Naive thymus-derived CD4-positive, alpha-beta T cell (primary cell): ENCODE measurements at regions of chr10 and their contacts with region 1.

Region 1: DNA sequence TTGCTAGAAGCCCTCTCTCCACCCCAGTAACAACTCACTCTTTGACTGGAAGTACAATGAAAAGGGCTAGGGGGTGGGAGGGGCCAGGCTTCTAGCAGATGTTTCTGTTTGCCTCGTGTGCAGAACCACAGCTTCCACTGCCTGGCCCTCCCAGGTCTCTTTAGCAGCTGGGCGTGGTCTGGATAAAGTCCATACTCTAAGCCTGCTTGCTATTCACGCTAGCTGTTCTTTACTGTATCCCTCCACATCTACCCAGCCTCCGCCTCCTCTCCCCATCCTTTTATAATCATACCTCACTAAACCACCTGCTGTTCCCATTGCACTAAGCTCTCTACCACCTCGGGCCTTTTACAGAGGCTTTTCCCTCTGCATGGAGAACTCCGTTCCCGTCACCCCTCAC is 288.8 kb downstream of the CAMK1D start:
- DNase-seq: peak in 1 of 9 donors; percentile 14
- ATAC-seq: no peak
- H3K4me3 ChIP-seq: no peak overlapping the region
- H3K4me3 Mint-ChIP-seq: peak overlapping the region in 8 of 10 donors; percentile 1 to 69 (median 24)
- H3K27ac ChIP-seq: no peak overlapping the region
- H3K27ac Mint-ChIP-seq: peak overlapping the region in 6 of 9 donors; percentile 16 to 90 (median 54)
- H3K4me1 ChIP-seq: peaks cover 0 to 20% of the 10 kb centered on the region in 2 donors
- H3K4me1 Mint-ChIP-seq: peaks cover 24 to 63% (median 51%) of the 10 kb centered on the region in 7 donors
- H3K27me3 ChIP-seq: no peaks in the 10 kb centered on the region
- H3K27me3 Mint-ChIP-seq: no peaks in the 10 kb centered on the region

Region 2: GRCh38 chr10:12594448-12594944 is 43.6 kb before region 1 on chr10:
- CTCF ChIA-PET with region 1: no interaction called
- POLR2A ChIA-PET with region 1: no interaction called
- intact Hi-C with region 1: loop called in 1 of 2 experiments (anchors 1 kb)
- DNase-seq: peak in 8 of 9 donors; percentile 25 to 66 (median 52)
- ATAC-seq: peak; percentile 78
- H3K4me3 ChIP-seq: no peak overlapping the region
- H3K4me3 Mint-ChIP-seq: peak overlapping the region; percentile 61 to 90 (median 72)
- H3K27ac ChIP-seq: peak overlapping the region; percentile 41
- H3K27ac Mint-ChIP-seq: peak overlapping the region; percentile 90 to 99 (median 94)
- H3K4me1 ChIP-seq: peaks cover 15 to 65% of the 10 kb centered on the region in 2 donors
- H3K4me1 Mint-ChIP-seq: peaks cover 43 to 100% (median 94%) of the 10 kb centered on the region in 7 donors
- H3K27me3 ChIP-seq: no peaks in the 10 kb centered on the region
- H3K27me3 Mint-ChIP-seq: no peaks in the 10 kb centered on the region